Activated CD4-positive, alpha-beta T cell treated with anti-CD3 and anti-CD28 coated beads, Interleukin-2, amount 10 ng/mL, durations not matched to agents 24 days and 14 days (primary cell): ENCODE measurements at regions of chr17 and their contacts with region 1.

Region 1: DNA sequence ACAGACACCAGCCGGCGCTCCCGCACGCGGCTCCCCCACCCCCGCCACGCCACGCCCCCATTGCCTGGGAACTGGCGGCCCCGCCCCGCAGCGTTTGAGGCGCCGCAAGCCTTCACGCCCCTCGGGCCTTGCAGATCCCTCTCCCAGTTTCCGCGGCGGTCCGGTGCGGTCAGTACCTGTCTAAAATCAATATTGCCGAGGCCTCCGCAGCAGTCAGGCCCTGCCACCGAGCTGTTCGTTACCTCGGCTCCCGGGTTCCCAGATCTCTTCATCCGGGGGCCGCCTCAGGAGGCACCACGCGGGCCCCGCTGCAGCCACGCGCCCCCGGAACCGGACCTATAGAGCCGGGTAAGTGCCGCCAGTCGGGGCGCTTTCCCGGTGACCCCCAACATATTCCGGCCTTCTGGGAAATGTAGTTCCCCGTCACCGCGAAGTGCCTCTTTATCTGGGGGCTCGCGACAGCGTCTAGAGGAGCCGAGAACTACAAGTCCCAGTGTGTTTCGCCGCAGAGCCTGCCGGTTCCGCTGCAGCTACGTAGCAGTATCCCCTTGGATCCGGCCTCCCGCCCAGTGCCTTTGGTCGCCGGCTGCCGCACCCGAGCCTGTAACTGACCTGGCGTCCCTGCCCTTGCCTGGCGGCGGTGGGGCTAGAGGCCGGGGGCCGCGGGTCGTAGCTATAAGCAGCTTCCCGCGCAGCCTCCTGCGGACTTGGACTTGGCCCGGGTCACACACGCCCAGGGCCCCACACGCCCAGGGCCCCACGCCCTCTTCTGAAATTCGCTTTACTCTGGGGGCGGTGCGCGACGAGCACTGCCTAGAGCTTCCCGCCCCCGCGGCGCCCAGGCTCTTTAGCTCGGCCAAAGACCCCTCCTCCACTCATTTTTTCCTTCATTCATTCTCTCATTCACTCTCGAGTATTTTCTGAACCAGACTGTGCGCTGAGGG is at the start of gene PEMT:
- DNase-seq: peak; percentile 98
- H3K4me3 Mint-ChIP-seq: peak within 1 kb of the TSS; percentile 92
- H3K27ac Mint-ChIP-seq: peak within 1 kb of the TSS; percentile 96
- H3K4me1 Mint-ChIP-seq: peaks cover 18% of the 10 kb centered on the region
- H3K27me3 Mint-ChIP-seq: no peaks in the 10 kb centered on the region
- total RNA-seq, gene PEMT: 43.6 and 45.5 TPM in 2 replicates

Region 2: DNA sequence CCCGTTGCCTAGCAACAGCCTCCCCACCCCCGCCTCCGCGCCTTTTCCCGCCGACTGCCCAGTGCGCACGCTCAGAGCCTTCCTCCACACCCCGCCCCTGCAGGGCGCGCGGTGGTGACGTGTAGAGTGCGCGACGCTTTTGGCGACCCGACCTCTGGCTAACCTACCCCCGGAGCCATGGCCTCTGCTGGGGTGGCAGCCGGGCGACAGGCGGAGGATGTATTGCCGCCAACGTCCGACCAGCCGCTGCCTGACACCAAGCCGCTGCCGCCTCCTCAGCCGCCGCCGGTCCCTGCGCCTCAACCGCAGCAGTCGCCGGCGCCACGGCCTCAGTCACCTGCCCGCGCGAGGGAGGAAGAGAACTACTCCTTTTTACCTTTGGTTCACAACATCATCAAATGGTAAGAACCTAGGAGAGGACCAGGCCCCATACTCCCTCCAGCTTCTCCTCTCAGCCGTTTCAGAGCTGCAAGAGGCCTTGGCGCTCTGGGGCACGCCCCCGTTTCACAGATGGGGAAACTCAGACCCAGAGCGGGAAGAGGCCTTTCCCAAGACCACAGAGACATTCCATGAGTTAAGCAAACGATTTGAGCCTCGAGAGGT is 114.7 kb before region 1 on chr17 and contains the start of gene MED9:
- intact Hi-C with region 1: loop called (anchors 1 kb)
- DNase-seq: peak; percentile 99
- H3K4me3 Mint-ChIP-seq: peak within 1 kb of the TSS; percentile 96
- H3K27ac Mint-ChIP-seq: peak within 1 kb of the TSS; percentile 93
- H3K4me1 Mint-ChIP-seq: peaks cover 35% of the 10 kb centered on the region
- H3K27me3 Mint-ChIP-seq: peaks cover 13% of the 10 kb centered on the region
- total RNA-seq, gene MED9: 14.4 and 15.3 TPM in 2 replicates

Region 3: GRCh38 chr17:17515934-17516930 is 75.4 kb before region 1 on chr17:
- intact Hi-C with region 1: no loop called
- DNase-seq: no peak
- H3K4me3 Mint-ChIP-seq: no peak overlapping the region
- H3K27ac Mint-ChIP-seq: no peak overlapping the region
- H3K4me1 Mint-ChIP-seq: no peaks in the 10 kb centered on the region
- H3K27me3 Mint-ChIP-seq: no peaks in the 10 kb centered on the region

Region 4: GRCh38 chr17:17681187-17681848 is 89.7 kb after region 1 on chr17 and contains the start of gene RAI1:
- intact Hi-C with region 1: no loop called
- DNase-seq: peak; percentile 92
- H3K4me3 Mint-ChIP-seq: peak within 1 kb of the TSS; percentile 91
- H3K27ac Mint-ChIP-seq: peak within 1 kb of the TSS; percentile 90
- H3K4me1 Mint-ChIP-seq: peaks cover 25% of the 10 kb centered on the region
- H3K27me3 Mint-ChIP-seq: peaks cover 12% of the 10 kb centered on the region
- total RNA-seq, gene RAI1: 30.1 and 34.5 TPM in 2 replicates

Region 5: GRCh38 chr17:17972126-17972951 is 380.7 kb after region 1 on chr17 and contains the starts of genes DRC3 and TOM1L2:
- intact Hi-C with region 1: loop called (anchors 1 kb)
- DNase-seq: peak; percentile 100
- H3K4me3 Mint-ChIP-seq: peak within 1 kb of the TSS; percentile 94
- H3K27ac Mint-ChIP-seq: peak within 1 kb of the TSS; percentile 92
- H3K4me1 Mint-ChIP-seq: peaks cover 22% of the 10 kb centered on the region
- H3K27me3 Mint-ChIP-seq: no peaks in the 10 kb centered on the region
- total RNA-seq, gene DRC3: 0.42 TPM in 1 of 2 replicates, not detected in the other
- total RNA-seq, gene TOM1L2: 8.8 and 10.0 TPM in 2 replicates